Esophagus muscularis mucosa (tissue), 4 donors: ENCODE measurements at regions of chr1 and their contacts with region 1.

Region 1: GRCh38 chr1:234486498-234487448 is 7.8 kb upstream of the TARBP1 start:
- DNase-seq: no peak
- H3K4me3 ChIP-seq: peak overlapping the region; percentile 11 to 32 (median 27)
- H3K27ac ChIP-seq: peak overlapping the region in 3 of 4 donors; percentile 46 to 57 (median 52)
- H3K4me1 ChIP-seq: peaks cover 6 to 14% (median 12%) of the 10 kb centered on the region in 4 donors
- H3K27me3 ChIP-seq: peaks cover 0 to 3% (median 0%) of the 10 kb centered on the region in 4 donors
- CTCF ChIP-seq: peak; percentile 69 to 80 (median 77)
- EP300 ChIP-seq: no peak
- POLR2A ChIP-seq: no peak

Region 2: DNA sequence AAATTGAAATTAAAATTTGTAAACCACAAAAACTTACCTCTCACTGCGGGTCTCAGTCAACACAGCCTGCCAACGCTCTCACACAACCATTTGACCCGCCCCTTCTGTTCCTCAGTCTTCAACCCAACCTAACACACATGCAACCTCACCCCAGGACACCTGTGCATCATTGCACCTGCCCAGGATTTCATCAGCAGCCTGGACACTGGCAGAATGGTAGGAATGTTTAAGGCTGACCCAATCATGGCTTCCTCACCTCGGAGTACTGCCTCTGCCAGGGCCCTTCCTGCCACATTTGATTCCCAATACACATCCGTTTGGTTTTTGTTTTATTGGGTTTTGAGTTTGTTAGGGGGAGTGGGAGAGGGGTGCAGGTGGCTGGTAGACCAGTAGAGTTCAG is 601.1 kb after region 1 on chr1:
- intact Hi-C with region 1: loop called (anchors 5 kb)
- DNase-seq: no peak
- H3K4me3 ChIP-seq: no peak overlapping the region
- H3K27ac ChIP-seq: no peak overlapping the region
- H3K4me1 ChIP-seq: peaks cover 14 to 38% (median 33%) of the 10 kb centered on the region in 4 donors
- H3K27me3 ChIP-seq: no peaks in the 10 kb centered on the region
- CTCF ChIP-seq: no peak
- EP300 ChIP-seq: no peak
- POLR2A ChIP-seq: no peak